B cell (primary cell): ENCODE measurements at regions of chr11 and their contacts with region 1.

Region 1: GRCh38 chr11:65569973-65570918 is at the start of gene ZNRD2:
- DNase-seq: peak; percentile 99
- ATAC-seq: peak; percentile 67
- H3K4me3 ChIP-seq: peak within 1 kb of the TSS; percentile 58 to 89 (median 83)
- H3K4me3 Mint-ChIP-seq: peak within 1 kb of the TSS; percentile 99
- H3K27ac ChIP-seq: peak within 1 kb of the TSS; percentile 96 to 97
- H3K27ac Mint-ChIP-seq: peak within 1 kb of the TSS; percentile 99
- H3K4me1 ChIP-seq: peaks cover 58 to 77% of the 10 kb centered on the region in 2 donors
- H3K4me1 Mint-ChIP-seq: peaks cover 75% of the 10 kb centered on the region
- H3K27me3 ChIP-seq: no peaks in the 10 kb centered on the region
- H3K27me3 Mint-ChIP-seq: no peaks in the 10 kb centered on the region
- CTCF ChIP-seq: peak; percentile 48
- total RNA-seq, gene ZNRD2: 22.1 and 24.0 TPM in 2 replicates

Region 2: GRCh38 chr11:65382033-65382807 is 188.0 kb before region 1 on chr11 and contains the start of gene SLC25A45:
- CTCF ChIA-PET with region 1: interaction called, 3 read pairs
- POLR2A ChIA-PET with region 1: no interaction called
- intact Hi-C with region 1: loop called (anchors 5 kb)
- DNase-seq: peak; percentile 93
- ATAC-seq: peak; percentile 83
- H3K4me3 ChIP-seq: peak within 1 kb of the TSS; percentile 44 to 81 (median 61)
- H3K4me3 Mint-ChIP-seq: peak within 1 kb of the TSS; percentile 92
- H3K27ac ChIP-seq: peak within 1 kb of the TSS; percentile 91
- H3K27ac Mint-ChIP-seq: peak within 1 kb of the TSS; percentile 98
- H3K4me1 ChIP-seq: peaks cover 35 to 71% of the 10 kb centered on the region in 2 donors
- H3K4me1 Mint-ChIP-seq: peaks cover 63% of the 10 kb centered on the region
- H3K27me3 ChIP-seq: no peaks in the 10 kb centered on the region
- H3K27me3 Mint-ChIP-seq: no peaks in the 10 kb centered on the region
- CTCF ChIP-seq: peak; percentile 85
- total RNA-seq, gene SLC25A45: 16.4 and 18.2 TPM in 2 replicates

Region 3: DNA sequence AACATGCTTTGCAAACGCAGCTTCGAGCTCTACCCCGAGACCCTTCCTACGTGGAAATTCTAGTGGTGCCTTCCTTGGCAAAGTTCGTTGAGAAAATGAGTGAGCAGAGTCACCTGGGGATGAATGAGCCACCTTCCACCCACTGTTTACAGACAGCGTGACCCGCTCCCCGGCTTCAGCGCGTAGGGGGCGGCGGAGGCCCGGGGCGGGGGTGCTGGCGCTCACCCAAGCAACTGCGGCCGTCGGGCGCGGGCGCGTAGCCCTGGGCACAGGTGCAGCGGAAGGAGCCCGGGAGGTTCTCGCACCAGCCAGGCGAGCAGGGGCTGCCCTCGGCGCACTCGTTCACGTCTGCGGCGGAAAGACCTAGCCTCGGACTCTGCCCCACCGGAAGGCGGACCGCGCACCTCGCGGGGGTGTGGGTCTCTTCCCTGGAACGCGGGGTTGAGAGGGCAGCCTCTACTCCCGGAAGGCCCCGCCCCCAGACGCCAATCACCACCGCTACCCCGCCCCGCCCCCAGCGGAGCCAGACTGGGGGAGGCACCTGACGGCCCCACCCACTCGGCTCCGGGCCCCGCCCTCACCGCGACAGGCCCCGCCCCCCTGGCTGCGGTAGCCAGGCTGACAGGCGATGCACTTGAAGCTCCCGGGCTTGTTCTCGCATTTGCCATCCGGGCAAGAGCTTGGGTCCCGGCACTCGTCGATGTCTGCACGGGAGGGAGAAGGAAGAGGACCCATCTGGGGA is 23.9 kb before region 1 on chr11:
- CTCF ChIA-PET with region 1: interaction called, 86 read pairs
- POLR2A ChIA-PET with region 1: interaction called, 53 read pairs
- intact Hi-C with region 1: loop called (anchors 1 kb)
- DNase-seq: peak; percentile 98
- ATAC-seq: peak; percentile 89
- H3K4me3 ChIP-seq: peak overlapping the region in 4 of 5 experiments; percentile 40 to 60 (median 52)
- H3K4me3 Mint-ChIP-seq: peak overlapping the region; percentile 89
- H3K27ac ChIP-seq: peak overlapping the region; percentile 79 to 93
- H3K27ac Mint-ChIP-seq: peak overlapping the region; percentile 93
- H3K4me1 ChIP-seq: peaks cover 34 to 50% of the 10 kb centered on the region in 2 donors
- H3K4me1 Mint-ChIP-seq: peaks cover 59% of the 10 kb centered on the region
- H3K27me3 ChIP-seq: no peaks in the 10 kb centered on the region
- H3K27me3 Mint-ChIP-seq: no peaks in the 10 kb centered on the region
- CTCF ChIP-seq: no peak

Region 4: GRCh38 chr11:65588199-65589054 is 18.2 kb after region 1 on chr11:
- CTCF ChIA-PET with region 1: interaction called, 97 read pairs
- POLR2A ChIA-PET with region 1: interaction called, 45 read pairs
- intact Hi-C with region 1: loop called (anchors 1 kb)
- DNase-seq: peak; percentile 87
- ATAC-seq: peak; percentile 76
- H3K4me3 ChIP-seq: peak overlapping the region in 3 of 5 experiments; percentile 9 to 26 (median 13)
- H3K4me3 Mint-ChIP-seq: peak overlapping the region; percentile 75
- H3K27ac ChIP-seq: peak overlapping the region; percentile 82 to 92
- H3K27ac Mint-ChIP-seq: peak overlapping the region; percentile 93
- H3K4me1 ChIP-seq: peaks cover 27 to 41% of the 10 kb centered on the region in 2 donors
- H3K4me1 Mint-ChIP-seq: peaks cover 38% of the 10 kb centered on the region
- H3K27me3 ChIP-seq: no peaks in the 10 kb centered on the region
- H3K27me3 Mint-ChIP-seq: no peaks in the 10 kb centered on the region
- CTCF ChIP-seq: peak; percentile 83

Region 5: DNA sequence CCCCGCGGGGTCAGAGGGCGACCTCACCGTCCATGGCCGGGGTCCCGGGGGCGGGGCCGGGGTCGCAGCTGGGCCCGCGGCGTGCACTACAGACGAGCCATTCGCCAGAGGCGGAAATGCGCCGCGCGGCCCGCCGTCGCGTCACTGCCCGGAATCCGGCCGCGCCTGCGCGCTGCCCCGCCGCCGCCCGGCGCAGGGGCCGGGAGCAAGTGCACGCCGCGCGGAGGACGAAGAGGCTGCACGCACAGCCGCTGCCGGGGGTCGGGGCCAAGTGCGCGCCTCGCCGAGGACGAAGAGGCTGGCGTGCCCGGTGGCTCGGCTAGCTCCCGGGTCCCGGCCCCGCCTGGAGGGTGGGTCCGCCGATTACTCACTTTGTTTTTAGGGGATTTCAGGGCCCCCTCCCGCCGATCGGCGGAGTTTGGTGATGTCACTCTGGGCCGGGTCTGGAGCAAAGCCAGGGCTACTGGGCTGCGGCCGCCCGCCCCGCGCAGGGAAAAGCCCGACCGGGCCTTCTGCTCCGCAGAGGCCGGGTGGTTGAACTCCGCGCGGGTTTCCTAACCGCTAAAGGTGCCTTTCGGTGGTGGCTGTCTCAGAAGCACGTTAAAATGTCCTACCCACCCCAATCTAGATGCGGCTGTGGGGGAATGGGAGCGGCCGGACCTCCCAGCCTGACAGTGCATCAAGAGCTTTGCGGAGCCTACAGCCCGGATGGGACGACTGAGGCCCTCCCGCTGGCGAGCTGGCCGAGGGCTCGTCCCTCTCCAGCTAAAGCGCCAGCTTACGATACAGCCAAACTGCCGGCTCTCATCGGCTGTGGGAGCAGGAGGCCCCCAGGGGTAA is 92.8 kb after region 1 on chr11 and contains the start of gene RELA:
- CTCF ChIA-PET with region 1: no interaction called
- POLR2A ChIA-PET with region 1: interaction called, 4 read pairs
- intact Hi-C with region 1: loop called (anchors 1 kb)
- DNase-seq: peak; percentile 94
- ATAC-seq: peak; percentile 86
- H3K4me3 ChIP-seq: peak within 1 kb of the TSS; percentile 85 to 99 (median 95)
- H3K4me3 Mint-ChIP-seq: peak within 1 kb of the TSS; percentile 89
- H3K27ac ChIP-seq: peak within 1 kb of the TSS; percentile 97 to 100
- H3K27ac Mint-ChIP-seq: peak within 1 kb of the TSS; percentile 94
- H3K4me1 ChIP-seq: peaks cover 19 to 32% of the 10 kb centered on the region in 2 donors
- H3K4me1 Mint-ChIP-seq: peaks cover 31% of the 10 kb centered on the region
- H3K27me3 ChIP-seq: no peaks in the 10 kb centered on the region
- H3K27me3 Mint-ChIP-seq: no peaks in the 10 kb centered on the region
- CTCF ChIP-seq: no peak
- total RNA-seq, gene RELA: 154 and 160 TPM in 2 replicates

Region 6: DNA sequence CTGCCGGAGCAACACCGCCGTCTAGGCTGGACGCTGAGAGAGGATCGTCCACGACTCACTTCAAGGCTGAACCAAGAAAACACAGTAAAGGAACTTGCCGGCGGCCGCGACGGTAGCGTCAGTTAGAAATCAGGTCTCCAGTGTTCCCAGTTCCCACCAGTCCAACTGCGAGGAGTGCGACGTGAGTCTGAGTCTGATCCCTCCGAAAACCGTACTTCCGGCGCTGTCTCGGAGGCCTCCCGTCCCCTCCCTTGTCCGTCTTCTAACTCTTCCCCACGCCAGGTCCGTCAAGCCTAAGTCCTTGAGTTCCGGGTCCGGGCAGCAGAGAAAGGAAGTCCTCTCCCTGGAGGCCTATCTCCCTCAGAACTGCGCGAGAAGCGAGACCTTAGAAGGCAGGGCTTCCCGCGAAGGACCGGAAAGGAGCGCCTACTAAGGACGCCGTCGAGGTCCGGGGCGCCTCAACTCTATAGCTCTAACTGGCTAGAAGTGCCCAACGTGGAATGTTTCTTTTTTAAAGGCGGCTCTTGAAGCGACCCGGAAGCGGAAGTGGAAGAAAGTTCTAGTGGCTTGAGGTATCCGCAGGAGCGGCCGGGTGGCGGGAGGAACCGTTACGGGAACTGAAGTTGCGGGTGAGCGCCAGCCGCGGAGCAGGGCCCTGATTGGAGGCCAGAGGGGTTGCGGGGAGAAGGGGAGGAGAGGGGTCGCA is 431.8 kb after region 1 on chr11 and contains the starts of genes BANF1 and EIF1AD:
- CTCF ChIA-PET with region 1: no interaction called
- POLR2A ChIA-PET with region 1: no interaction called
- intact Hi-C with region 1: loop called (anchors 5 kb)
- DNase-seq: peak; percentile 98
- ATAC-seq: peak; percentile 80
- H3K4me3 ChIP-seq: peak within 1 kb of the TSS; percentile 75 to 100 (median 96)
- H3K4me3 Mint-ChIP-seq: peak within 1 kb of the TSS; percentile 98
- H3K27ac ChIP-seq: peak within 1 kb of the TSS; percentile 89 to 94
- H3K27ac Mint-ChIP-seq: peak within 1 kb of the TSS; percentile 99
- H3K4me1 ChIP-seq: peaks cover 16 to 25% of the 10 kb centered on the region in 2 donors
- H3K4me1 Mint-ChIP-seq: peaks cover 34% of the 10 kb centered on the region
- H3K27me3 ChIP-seq: no peaks in the 10 kb centered on the region
- H3K27me3 Mint-ChIP-seq: no peaks in the 10 kb centered on the region
- CTCF ChIP-seq: no peak
- total RNA-seq, gene BANF1: 99.3 and 99.5 TPM in 2 replicates
- total RNA-seq, gene EIF1AD: 61.0 and 65.2 TPM in 2 replicates